PC-9 (cell line): ENCODE measurements at regions of chr1 and their contacts with region 1.

Region 1: DNA sequence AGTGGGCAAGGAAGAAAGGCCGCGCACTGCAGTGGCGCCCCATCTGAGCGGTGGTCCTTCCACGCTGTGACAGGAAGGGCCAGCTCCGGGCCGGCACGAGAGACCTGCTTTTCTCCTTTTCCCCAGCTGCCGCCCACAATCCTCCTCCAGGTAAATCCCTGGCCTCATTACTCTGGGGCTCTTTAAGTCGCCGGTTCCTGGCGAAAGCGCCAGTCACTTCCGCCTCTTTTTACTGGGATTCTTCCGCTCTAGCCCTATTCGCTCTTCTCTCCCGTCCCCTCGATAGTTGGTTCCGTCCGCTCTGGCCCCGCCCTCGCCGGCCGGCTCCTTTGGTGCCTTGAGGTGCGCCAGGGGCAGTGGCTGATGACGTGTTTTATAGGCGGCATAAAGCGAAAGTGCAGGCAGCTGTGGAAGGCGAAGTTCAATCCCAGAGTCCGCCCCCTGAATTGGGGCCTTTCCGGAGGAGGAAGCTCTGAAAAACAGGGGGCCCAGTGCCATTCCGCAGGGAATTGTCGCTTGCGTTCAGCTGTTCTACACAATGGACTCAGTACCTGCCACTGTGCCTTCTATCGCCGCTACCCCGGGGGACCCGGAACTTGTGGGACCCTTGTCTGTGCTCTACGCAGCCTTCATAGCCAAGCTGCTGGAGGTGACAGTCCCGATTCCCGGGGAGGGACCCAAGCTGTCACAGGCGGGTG is 26.2 kb downstream of the MIA3 start:
- DNase-seq: peak; percentile 97 to 99
- H3K4me3 ChIP-seq: peak overlapping the region; percentile 94
- H3K27ac ChIP-seq: peak overlapping the region; percentile 83
- H3K4me1 ChIP-seq: peaks cover 15% of the 10 kb centered on the region
- H3K27me3 ChIP-seq: no peaks in the 10 kb centered on the region
- CTCF ChIP-seq: no peak

Region 2: DNA sequence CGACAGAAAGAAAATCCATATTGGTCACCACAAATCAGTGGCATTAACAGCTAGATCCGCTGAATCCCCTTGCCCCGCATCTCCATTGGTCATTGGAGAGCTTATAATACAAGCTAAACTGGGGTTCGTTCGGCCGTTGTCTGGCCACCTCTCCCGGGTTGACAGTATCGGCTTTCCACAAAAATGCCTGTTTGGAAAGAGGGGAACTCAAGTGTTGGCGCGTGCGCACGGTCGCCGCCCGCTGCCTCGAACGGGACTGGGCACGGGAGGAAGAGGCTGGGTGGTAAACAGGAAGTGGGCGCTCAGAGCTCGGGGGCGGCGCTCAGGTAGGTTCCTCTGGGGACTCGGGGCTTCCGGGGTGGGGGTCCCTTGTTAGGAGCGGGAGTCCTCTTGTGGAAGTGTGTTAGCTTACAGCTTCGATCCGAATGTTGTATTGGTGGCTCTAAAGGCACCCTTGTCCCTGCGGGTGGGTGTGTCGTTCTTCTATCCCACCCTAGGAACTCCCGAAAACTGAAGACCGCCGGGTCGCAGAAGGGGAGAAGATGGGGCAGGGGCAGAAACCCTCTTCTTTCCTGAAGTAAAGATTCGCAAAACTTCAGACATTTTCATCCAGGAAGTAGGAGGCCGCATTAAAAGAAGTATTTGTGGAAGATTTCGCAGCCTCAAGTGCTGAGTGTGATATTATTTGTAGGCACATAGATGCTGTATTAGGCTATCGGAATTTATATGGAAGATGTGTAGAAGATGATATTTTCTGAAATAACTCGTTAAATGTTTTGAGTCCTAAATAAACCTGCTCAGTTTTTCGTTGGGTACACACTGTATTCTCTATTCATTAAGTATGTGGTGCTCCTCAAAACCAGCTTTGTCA is 69.2 kb after region 1 on chr1:
- CTCF ChIA-PET with region 1: no interaction called
- POLR2A ChIA-PET with region 1: no interaction called
- intact Hi-C with region 1: loop called (anchors 1 kb)
- DNase-seq: peak; percentile 84 to 93
- H3K4me3 ChIP-seq: peak overlapping the region; percentile 89
- H3K27ac ChIP-seq: peak overlapping the region; percentile 87
- H3K4me1 ChIP-seq: peaks cover 15% of the 10 kb centered on the region
- H3K27me3 ChIP-seq: no peaks in the 10 kb centered on the region
- CTCF ChIP-seq: no peak

Region 3: DNA sequence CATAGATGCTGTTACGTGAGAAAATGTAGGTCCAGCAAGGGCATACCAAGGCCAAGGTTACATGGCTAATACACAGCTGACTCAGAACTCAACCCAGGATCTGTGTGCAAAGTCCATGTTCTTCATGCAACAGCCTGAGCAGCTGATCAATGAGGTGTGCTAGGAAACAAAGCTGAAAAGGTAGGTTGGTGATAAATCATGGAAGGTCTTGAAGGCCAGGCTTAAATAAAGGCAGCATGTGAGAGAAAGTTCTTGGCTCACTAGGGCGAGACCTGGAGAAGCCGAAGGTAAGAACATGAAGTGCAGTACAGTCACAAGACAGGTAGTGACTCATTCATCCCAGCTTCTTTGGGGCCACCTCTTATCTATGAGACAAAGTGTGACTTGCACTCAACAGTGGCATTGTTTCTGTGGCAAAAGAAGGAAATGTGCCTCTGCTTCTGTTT is 465.5 kb after region 1 on chr1:
- CTCF ChIA-PET with region 1: no interaction called
- POLR2A ChIA-PET with region 1: no interaction called
- intact Hi-C with region 1: loop called (anchors 10 kb)
- DNase-seq: peak; percentile 47 to 60
- H3K4me3 ChIP-seq: no peak overlapping the region
- H3K27ac ChIP-seq: peak overlapping the region; percentile 15; the same call in 1 of the 2 replicates
- H3K4me1 ChIP-seq: peaks cover 14% of the 10 kb centered on the region
- H3K27me3 ChIP-seq: no peaks in the 10 kb centered on the region
- CTCF ChIP-seq: no peak